Calu3 (cell line): ENCODE measurements at regions of chr1 and their contacts with region 1.

Region 1: DNA sequence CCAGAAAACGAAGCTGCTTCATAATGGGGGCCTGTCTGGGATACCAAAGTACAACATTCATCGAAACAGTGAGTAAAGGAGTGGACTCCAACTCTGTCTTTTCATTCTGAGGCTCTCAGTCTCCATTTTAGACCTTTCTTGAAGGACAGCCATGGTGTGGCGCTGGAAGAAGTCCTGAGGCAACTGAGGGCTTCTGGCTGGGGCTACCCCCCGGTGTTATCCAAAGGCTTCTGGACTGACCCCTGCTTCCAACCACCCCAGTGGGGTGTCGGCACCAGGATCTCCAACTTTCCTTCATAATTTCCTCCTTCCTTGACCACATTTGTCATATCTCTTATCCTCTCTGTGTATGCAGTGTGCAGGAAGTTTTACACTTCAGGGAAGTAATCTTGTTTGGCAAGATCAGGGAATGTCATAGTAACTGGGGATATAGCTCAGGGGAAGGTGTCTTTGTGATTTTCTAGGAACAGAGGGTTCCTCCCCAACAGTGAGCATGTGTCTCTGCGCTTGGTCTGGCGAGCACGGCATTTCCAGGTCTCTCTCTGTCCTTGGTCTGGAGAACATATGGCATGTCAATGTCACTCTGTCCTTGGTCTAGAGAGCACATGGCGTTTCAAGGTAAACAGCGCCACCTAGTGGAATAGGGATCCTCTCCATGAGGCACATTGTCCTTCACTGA is 19.4 kb upstream of the BSDC1 start:
- DNase-seq: peak; percentile 66
- H3K4me3 Mint-ChIP-seq: no peak overlapping the region
- H3K27ac Mint-ChIP-seq: no peak overlapping the region
- H3K4me1 Mint-ChIP-seq: peaks cover 7% of the 10 kb centered on the region
- H3K27me3 Mint-ChIP-seq: peaks cover 17% of the 10 kb centered on the region
- CTCF ChIP-seq: peak; percentile 68

Region 2: DNA sequence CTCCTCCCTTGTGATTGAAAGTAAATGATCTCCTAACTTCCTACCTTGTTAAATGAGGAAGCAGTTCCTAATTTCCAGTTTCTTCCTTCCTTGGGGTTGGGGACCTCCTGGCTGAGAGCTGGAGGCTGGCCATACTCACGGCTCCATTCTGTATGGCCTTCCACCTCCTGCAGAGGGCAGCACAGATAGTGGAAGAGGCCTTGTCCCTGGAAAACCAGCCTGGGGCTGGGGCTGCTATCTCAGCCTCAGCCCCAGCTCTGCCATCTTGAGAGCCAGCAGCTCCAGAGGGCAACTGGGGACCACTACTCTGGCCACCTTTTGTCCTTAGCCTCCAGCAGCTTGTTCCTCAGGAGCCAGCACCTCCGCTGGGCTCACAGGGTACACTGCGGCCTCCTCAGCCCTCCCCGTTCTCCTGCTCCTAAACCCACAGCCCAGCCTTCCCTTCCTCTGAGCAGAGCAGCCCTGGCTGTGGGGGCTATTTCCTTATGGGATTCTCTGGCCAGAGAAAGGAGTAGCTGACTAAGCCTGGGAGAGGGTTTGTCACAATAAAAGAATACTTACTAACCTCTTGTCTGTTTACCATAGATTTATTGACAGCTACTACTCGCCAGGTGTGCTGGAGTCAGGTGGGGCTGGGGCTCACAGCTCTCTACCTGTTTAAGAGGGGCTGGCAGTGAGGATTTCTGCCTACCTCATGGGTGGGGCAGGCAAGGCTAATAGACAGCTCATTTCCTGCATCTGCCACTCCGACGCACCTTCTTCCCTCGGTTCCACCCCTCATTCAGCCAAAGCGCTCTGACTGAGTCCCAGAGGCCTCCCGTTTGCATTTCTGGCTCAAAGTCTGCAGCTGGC is 197.8 kb before region 1 on chr1:
- CTCF ChIA-PET with region 1: no interaction called
- intact Hi-C with region 1: loop called (anchors 5 kb)
- DNase-seq: peak; percentile 74
- H3K4me3 Mint-ChIP-seq: no peak overlapping the region
- H3K27ac Mint-ChIP-seq: no peak overlapping the region
- H3K4me1 Mint-ChIP-seq: peaks cover 5% of the 10 kb centered on the region
- H3K27me3 Mint-ChIP-seq: no peaks in the 10 kb centered on the region
- CTCF ChIP-seq: peak; percentile 68